Activated CD8-positive, alpha-beta T cell treated with anti-CD3 and anti-CD28 coated beads, Interleukin-2, amount 10 ng/mL, durations not matched to agents 7 days and 5 days (primary cell): ENCODE measurements at regions of chr16 and their contacts with region 1.

Region 1: GRCh38 chr16:47141773-47142485 is 1.8 kb downstream of the NETO2 start:
- DNase-seq: peak; percentile 89
- ATAC-seq: peak; percentile 67
- H3K4me3 Mint-ChIP-seq: peak overlapping the region; percentile 69
- H3K27ac Mint-ChIP-seq: peak overlapping the region; percentile 37
- H3K4me1 Mint-ChIP-seq: peaks cover 23% of the 10 kb centered on the region
- H3K27me3 Mint-ChIP-seq: peaks cover 31% of the 10 kb centered on the region

Region 2: GRCh38 chr16:46658925-46659324 is 483.0 kb before region 1 on chr16:
- CTCF ChIA-PET with region 1: no interaction called
- POLR2A ChIA-PET with region 1: no interaction called
- DNase-seq: peak; percentile 28
- ATAC-seq: peak; percentile 71
- H3K4me3 Mint-ChIP-seq: no peak overlapping the region
- H3K27ac Mint-ChIP-seq: peak overlapping the region; percentile 64
- H3K4me1 Mint-ChIP-seq: peaks cover 15% of the 10 kb centered on the region
- H3K27me3 Mint-ChIP-seq: no peaks in the 10 kb centered on the region

Region 3: GRCh38 chr16:47008174-47008573 is 133.8 kb before region 1 on chr16:
- CTCF ChIA-PET with region 1: no interaction called
- POLR2A ChIA-PET with region 1: no interaction called
- DNase-seq: no peak
- ATAC-seq: no peak
- H3K4me3 Mint-ChIP-seq: no peak overlapping the region
- H3K27ac Mint-ChIP-seq: no peak overlapping the region
- H3K4me1 Mint-ChIP-seq: peaks cover 2% of the 10 kb centered on the region
- H3K27me3 Mint-ChIP-seq: no peaks in the 10 kb centered on the region

Region 4: GRCh38 chr16:47073223-47074155 is 68.4 kb before region 1 on chr16:
- CTCF ChIA-PET with region 1: interaction called, 10 read pairs
- POLR2A ChIA-PET with region 1: no interaction called
- DNase-seq: no peak
- ATAC-seq: no peak
- H3K4me3 Mint-ChIP-seq: no peak overlapping the region
- H3K27ac Mint-ChIP-seq: no peak overlapping the region
- H3K4me1 Mint-ChIP-seq: peaks cover 6% of the 10 kb centered on the region
- H3K27me3 Mint-ChIP-seq: no peaks in the 10 kb centered on the region

Region 5: GRCh38 chr16:47162670-47163420 is 20.9 kb after region 1 on chr16:
- CTCF ChIA-PET with region 1: interaction called, 16 read pairs
- POLR2A ChIA-PET with region 1: no interaction called
- DNase-seq: no peak
- ATAC-seq: no peak
- H3K4me3 Mint-ChIP-seq: no peak overlapping the region
- H3K27ac Mint-ChIP-seq: no peak overlapping the region
- H3K4me1 Mint-ChIP-seq: no peaks in the 10 kb centered on the region
- H3K27me3 Mint-ChIP-seq: no peaks in the 10 kb centered on the region

Region 6: DNA sequence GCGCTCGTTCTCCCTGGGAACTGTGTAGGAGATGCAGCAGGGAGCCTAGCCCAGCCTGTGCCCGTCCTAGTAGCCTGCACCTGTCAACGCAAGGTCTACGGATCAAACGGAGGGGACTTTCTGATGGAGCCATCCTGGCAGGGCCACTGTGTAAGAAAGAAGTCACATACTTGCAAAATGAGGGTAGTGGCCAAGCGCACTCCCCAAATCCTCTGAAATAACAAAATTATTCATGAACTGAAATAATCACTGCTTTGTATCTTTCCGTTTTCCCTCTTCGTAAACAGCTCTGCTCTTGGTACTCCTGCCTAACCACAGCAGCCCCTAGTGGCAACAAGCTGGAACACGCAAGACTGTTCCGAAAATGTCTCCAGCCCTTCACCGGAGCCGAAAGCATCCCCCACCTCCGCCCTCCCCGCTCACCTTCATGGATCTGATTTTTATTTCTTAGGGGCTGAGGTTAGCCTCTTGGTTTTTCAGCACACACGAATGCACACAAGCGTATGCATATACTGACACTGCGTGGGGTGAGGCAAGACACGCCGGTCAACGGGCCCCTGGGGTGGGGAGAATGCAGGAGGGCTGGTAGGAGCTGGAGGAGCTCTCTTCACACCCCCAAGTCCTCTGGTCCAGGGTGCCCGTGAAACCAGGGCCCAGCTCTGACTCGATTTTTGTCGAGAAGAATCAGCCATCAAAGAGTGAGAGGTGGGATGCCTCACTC is 913.1 kb after region 1 on chr16:
- CTCF ChIA-PET with region 1: interaction called, 20 read pairs
- POLR2A ChIA-PET with region 1: no interaction called
- DNase-seq: peak; percentile 52
- ATAC-seq: peak; percentile 75
- H3K4me3 Mint-ChIP-seq: no peak overlapping the region
- H3K27ac Mint-ChIP-seq: no peak overlapping the region
- H3K4me1 Mint-ChIP-seq: no peaks in the 10 kb centered on the region
- H3K27me3 Mint-ChIP-seq: peaks cover 8% of the 10 kb centered on the region

Region 7: DNA sequence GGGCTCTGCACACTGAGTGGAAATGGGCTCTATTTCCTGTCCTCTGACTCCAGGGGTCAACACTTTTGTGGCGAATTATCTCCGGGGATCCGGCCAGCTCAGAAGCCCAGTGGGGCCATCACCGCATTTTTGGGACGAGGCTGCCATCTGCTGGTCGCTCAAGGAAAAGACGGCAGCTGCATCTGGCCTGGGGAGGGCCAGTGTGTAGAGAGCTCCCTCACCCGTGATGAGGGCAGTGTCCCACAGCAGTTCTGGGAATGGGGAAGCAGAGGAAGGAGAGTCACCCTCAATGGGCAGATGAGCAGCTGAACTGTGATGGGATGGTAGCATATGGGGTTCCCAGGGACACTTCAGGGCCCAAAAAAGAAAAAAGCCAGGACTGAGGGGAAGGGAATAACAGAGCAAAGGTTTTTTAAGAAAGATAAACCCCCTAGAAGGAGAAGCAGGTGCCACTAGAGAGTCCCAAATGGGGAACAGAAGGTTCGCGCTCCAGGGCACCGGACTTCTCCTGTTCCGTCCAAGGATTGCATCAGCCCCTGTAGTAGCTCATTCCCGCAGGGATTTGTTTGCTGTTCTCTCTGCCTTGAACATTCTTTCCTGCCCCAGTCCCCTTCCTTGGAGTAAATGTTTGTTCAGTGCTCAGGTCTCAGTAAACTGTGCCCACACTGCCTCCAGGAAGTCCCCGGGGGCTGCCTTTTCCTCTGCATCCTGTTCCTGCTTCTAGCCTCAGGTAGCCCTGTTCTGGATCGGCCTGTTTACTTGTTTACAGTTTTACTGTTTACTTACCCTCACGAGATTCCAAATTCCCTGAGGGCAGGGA is 1023.2 kb after region 1 on chr16:
- CTCF ChIA-PET with region 1: interaction called, 33 read pairs
- POLR2A ChIA-PET with region 1: no interaction called
- DNase-seq: peak; percentile 71
- ATAC-seq: peak; percentile 96
- H3K4me3 Mint-ChIP-seq: no peak overlapping the region
- H3K27ac Mint-ChIP-seq: no peak overlapping the region
- H3K4me1 Mint-ChIP-seq: peaks cover 11% of the 10 kb centered on the region
- H3K27me3 Mint-ChIP-seq: peaks cover 2% of the 10 kb centered on the region